ENCODE measurements at regions of chr1 and their contacts with region 1.

Region 1: DNA sequence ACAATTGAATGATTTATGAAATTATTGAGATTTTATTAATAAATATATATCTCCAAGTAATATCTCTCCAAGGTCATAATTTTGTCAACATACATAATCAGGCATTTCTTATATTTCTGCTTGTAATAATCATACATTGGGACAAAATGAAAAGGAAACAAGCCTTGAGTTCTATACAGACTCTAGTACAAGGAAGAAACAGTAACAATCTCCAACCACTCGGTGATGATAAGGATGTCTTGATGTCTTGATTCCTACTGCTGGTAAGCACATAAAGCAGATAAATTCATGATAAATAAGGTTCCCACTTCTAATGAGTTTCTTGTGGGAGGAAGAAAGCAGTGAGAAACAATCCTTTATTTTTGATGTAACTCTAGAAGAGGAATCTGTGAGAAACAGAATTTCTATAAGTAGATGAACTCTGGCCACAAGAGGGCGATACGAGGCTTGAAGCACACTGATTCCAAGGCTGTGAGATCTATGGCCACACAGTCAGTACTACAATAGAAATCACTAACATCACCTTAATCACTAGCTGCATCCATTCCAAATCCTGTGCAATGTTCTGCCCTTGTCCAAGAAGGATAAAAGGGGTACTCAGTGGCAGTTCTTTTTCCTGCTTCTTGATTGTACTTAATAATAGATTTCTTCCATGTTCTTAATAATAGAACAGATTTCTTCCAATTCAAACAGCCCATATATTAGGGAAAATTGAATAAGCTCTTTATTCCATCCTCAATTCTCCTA is 41.4 kb upstream of the LRRC8B start:
- DNase-seq: peak; percentile 81 to 92
- H3K4me3 ChIP-seq: no peak overlapping the region
- H3K27ac ChIP-seq: no peak overlapping the region
- H3K4me1 ChIP-seq: no peaks in the 10 kb centered on the region
- H3K27me3 ChIP-seq: no peaks in the 10 kb centered on the region
- CTCF ChIP-seq: peak in 4 of 7 experiments; percentile 36 to 72 (median 56)
- EP300 ChIP-seq: no peak
- POLR2A ChIP-seq: no peak

Region 2: GRCh38 chr1:89381618-89382017 is 101.6 kb before region 1 on chr1:
- intact Hi-C with region 1: no loop called
- DNase-seq: no peak
- H3K4me3 ChIP-seq: no peak overlapping the region
- H3K27ac ChIP-seq: no peak overlapping the region
- H3K4me1 ChIP-seq: no peaks in the 10 kb centered on the region
- H3K27me3 ChIP-seq: no peaks in the 10 kb centered on the region
- CTCF ChIP-seq: no peak
- EP300 ChIP-seq: no peak
- POLR2A ChIP-seq: no peak

Region 3: DNA sequence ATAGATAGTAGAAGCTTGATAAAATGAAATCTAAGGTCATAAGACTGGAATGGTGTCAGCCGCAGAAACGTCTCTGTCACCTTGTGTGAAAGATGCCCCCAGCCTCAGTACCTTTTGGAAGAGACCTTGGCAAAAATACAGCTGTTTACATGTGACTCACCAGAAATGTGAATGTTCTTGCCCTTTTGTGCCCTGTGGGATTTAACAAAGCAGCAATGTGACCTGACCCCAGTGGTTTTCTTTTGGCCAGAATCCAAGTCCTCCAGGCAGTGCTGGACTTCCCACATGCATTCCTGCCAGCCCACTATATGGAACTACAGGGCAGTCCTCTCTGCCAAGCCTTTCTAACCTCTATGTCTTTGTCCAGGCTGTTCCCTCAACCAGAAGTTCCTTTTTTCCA is 122.5 kb after region 1 on chr1:
- intact Hi-C with region 1: loop called (anchors 10 kb)
- DNase-seq: no peak
- H3K4me3 ChIP-seq: no peak overlapping the region
- H3K27ac ChIP-seq: no peak overlapping the region
- H3K4me1 ChIP-seq: peaks cover 0 to 11% (median 4%) of the 10 kb centered on the region in 4 donors
- H3K27me3 ChIP-seq: no peaks in the 10 kb centered on the region
- CTCF ChIP-seq: no peak
- EP300 ChIP-seq: no peak
- POLR2A ChIP-seq: no peak

Region 4: DNA sequence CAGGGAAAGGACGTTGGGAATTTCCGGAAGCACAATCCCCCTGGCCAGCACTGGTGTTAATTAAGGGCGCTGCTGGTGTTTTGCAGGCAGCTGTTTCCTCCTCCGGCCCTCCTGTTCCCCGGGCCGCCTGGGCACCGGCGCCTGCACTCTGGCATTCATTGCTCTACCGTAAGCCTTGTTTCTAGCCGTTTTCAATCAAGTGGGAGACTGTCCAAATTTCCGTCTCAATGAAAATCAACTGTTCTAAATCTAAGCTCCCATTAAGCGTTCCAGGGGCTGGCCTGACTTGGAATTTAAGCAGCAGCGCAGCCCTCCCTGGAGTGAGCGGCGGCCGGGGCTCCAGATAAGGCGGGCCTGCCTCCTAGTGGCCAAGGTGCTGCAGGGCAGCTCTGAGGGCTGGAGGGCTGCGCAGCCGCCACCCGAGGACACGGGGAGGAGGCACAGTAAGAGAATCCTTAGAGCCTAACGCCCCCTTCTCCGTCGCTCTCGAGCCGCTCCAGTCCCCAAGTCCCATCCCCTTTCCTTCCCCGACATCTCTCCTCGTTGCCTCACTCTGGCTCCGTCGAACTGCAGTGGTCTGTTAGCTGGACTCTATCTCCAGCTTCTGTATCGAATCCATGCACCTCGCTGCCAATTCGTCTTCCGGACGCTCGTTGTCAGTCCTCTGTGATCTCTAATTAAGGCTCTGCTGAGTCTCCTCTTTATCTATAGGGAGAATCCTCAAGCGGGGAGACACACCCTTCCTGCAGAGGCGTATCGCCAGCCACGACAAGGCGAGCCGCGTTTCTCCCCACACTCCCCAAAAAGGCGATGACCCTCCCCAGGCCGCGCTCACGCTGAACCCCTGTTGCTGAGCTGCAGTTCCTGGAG is 279.8 kb after region 1 on chr1:
- intact Hi-C with region 1: loop called (anchors 10 kb)
- DNase-seq: peak; percentile 84 to 95
- H3K4me3 ChIP-seq: peak overlapping the region; percentile 41 to 47 (median 45)
- H3K27ac ChIP-seq: peak overlapping the region in 4 of 5 donors; percentile 42 to 78 (median 56)
- H3K4me1 ChIP-seq: peaks cover 5 to 39% (median 17%) of the 10 kb centered on the region in 4 donors
- H3K27me3 ChIP-seq: no peaks in the 10 kb centered on the region
- CTCF ChIP-seq: peak in 5 of 7 experiments; percentile 93 to 96 (median 94)
- EP300 ChIP-seq: no peak
- POLR2A ChIP-seq: no peak

Region 5: GRCh38 chr1:89804642-89805237 is 321.6 kb after region 1 on chr1:
- intact Hi-C with region 1: no loop called
- DNase-seq: peak; percentile 91 to 95
- H3K4me3 ChIP-seq: no peak overlapping the region
- H3K27ac ChIP-seq: no peak overlapping the region
- H3K4me1 ChIP-seq: peaks cover 0 to 5% (median 2%) of the 10 kb centered on the region in 4 donors
- H3K27me3 ChIP-seq: no peaks in the 10 kb centered on the region
- CTCF ChIP-seq: peak in 5 of 7 experiments; percentile 81 to 86 (median 83)
- EP300 ChIP-seq: no peak
- POLR2A ChIP-seq: no peak